Ascending aorta (tissue), 2 donors: ENCODE measurements at regions of chr9 and their contacts with region 1.

Region 1: GRCh38 chr9:105178076-105178475 is 66.4 kb upstream of the SLC44A1 start:
- DNase-seq: no peak
- H3K4me3 ChIP-seq: no peak overlapping the region
- H3K27ac ChIP-seq: no peak overlapping the region
- H3K4me1 ChIP-seq: no peaks in the 10 kb centered on the region
- H3K27me3 ChIP-seq: no peaks in the 10 kb centered on the region
- CTCF ChIP-seq: no peak

Region 2: GRCh38 chr9:105220451-105220850 is 42.4 kb after region 1 on chr9:
- intact Hi-C with region 1: loop called (anchors 5 kb)
- DNase-seq: no peak
- H3K4me3 ChIP-seq: no peak overlapping the region
- H3K27ac ChIP-seq: no peak overlapping the region
- H3K4me1 ChIP-seq: no peaks in the 10 kb centered on the region
- H3K27me3 ChIP-seq: no peaks in the 10 kb centered on the region
- CTCF ChIP-seq: no peak